CD4-positive, alpha-beta T cell (primary cell): ENCODE measurements at regions of chr19 and their contacts with region 1.

Region 1: GRCh38 chr19:19997656-19998268 is 41.5 kb downstream of the ZNF682 start:
- DNase-seq: peak; percentile 10 to 65 (median 27)
- ATAC-seq: peak; percentile 55
- H3K4me3 ChIP-seq: no peak overlapping the region
- H3K4me3 Mint-ChIP-seq: no peak overlapping the region
- H3K27ac ChIP-seq: no peak overlapping the region
- H3K27ac Mint-ChIP-seq: no peak overlapping the region
- H3K4me1 ChIP-seq: no peaks in the 10 kb centered on the region
- H3K4me1 Mint-ChIP-seq: no peaks in the 10 kb centered on the region
- H3K27me3 ChIP-seq: no peaks in the 10 kb centered on the region
- H3K27me3 Mint-ChIP-seq: no peaks in the 10 kb centered on the region
- CTCF ChIP-seq: peak; percentile 70

Region 2: GRCh38 chr19:19943848-19944582 is 53.7 kb before region 1 on chr19:
- CTCF ChIA-PET with region 1: no interaction called
- POLR2A ChIA-PET with region 1: no interaction called
- intact Hi-C with region 1: no loop called
- DNase-seq: no peak
- ATAC-seq: no peak
- H3K4me3 ChIP-seq: no peak overlapping the region
- H3K4me3 Mint-ChIP-seq: no peak overlapping the region
- H3K27ac ChIP-seq: no peak overlapping the region
- H3K27ac Mint-ChIP-seq: no peak overlapping the region
- H3K4me1 ChIP-seq: no peaks in the 10 kb centered on the region
- H3K4me1 Mint-ChIP-seq: no peaks in the 10 kb centered on the region
- H3K27me3 ChIP-seq: peaks cover 0 to 8% of the 10 kb centered on the region in 2 experiments
- H3K27me3 Mint-ChIP-seq: peaks cover 5% of the 10 kb centered on the region
- CTCF ChIP-seq: no peak

Region 3: GRCh38 chr19:20513179-20513934 is 515.6 kb after region 1 on chr19:
- CTCF ChIA-PET with region 1: no interaction called
- POLR2A ChIA-PET with region 1: no interaction called
- intact Hi-C with region 1: loop called in 1 of 2 experiments (anchors 5 kb)
- DNase-seq: peak in 4 of 14 experiments; percentile 18 to 23 (median 20)
- ATAC-seq: no peak
- H3K4me3 ChIP-seq: no peak overlapping the region
- H3K4me3 Mint-ChIP-seq: no peak overlapping the region
- H3K27ac ChIP-seq: no peak overlapping the region
- H3K27ac Mint-ChIP-seq: no peak overlapping the region
- H3K4me1 ChIP-seq: no peaks in the 10 kb centered on the region
- H3K4me1 Mint-ChIP-seq: no peaks in the 10 kb centered on the region
- H3K27me3 ChIP-seq: no peaks in the 10 kb centered on the region
- H3K27me3 Mint-ChIP-seq: no peaks in the 10 kb centered on the region
- CTCF ChIP-seq: no peak